ENCODE measurements at regions of chr11 and their contacts with region 1.

Region 1: DNA sequence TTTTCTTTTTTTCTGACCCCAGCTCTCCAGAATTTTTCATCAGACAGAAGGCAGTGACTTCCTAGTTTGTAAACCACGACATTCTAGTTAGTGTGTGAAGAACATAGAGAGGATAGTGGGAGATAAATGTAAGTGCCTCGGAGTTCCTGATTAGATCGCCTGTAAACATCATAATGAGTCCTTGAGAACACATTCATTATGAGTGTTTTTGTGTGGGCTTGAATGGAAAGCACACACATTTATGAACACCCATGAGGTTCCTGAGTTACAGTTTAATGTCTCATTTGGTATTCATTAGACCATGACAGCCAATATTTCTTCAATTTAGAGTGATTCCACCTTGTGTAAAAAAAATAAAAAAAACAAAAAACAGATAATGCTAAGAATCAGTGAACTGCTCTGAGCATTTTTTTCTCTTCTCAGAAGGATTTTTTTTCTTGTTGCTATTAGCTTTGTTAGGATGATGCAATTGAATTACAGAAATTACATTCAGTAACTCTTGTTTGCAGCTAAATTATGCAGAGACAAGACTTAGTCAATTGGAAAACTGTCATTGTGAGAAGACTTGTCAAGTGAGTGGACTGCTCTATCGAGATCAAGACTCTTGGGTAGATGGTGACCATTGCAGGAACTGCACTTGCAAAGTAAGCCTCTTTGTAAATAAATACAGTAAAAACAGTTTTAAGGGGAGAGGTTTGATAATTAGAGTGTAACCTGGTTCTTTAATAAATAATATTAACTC is 257.6 kb downstream of the NELL1 start:
- DNase-seq: no peak
- H3K4me3 ChIP-seq: no peak overlapping the region
- CTCF ChIP-seq: no peak
- POLR2A ChIP-seq: no peak

Region 2: DNA sequence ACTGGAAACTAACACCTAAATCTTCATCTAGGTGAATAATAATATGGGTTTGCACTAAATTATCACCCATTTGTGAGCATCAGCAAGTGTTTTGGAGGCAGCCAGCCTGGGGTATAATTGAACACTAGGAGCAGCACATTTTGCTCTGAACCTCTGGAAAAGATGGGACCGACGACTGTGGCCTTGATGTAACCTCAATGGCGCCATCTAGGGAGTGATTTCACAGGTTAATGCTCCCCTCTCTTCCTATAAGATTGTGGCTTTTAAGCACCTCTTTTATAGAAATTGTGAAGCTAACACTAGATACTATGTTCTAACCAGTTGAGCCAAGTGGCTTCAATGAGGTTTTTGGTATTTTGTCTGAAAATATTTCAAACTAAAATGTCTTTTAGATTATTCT is 53.9 kb before region 1 on chr11:
- intact Hi-C with region 1: loop called (anchors 5 kb)
- DNase-seq: no peak
- H3K4me3 ChIP-seq: no peak overlapping the region
- CTCF ChIP-seq: no peak
- POLR2A ChIP-seq: no peak

Region 3: DNA sequence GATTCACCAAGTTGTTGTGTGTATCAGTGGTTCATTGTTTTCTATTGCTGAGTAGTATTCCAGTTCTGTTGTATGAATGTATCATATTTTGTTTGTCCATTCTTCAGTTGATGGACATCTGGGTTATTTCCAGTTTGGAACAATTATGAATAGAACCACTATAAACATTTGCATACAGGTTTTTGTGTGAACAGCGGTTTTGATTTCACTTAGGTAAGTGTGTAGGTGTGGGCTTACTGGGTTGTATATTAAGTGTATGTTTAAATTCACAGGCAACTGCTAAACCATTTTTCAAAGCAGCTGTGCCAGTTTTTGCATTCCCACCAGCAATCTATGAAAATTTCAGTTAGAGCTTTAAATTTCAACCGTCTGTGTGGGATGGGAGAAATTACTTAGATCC is 39.8 kb before region 1 on chr11:
- intact Hi-C with region 1: no loop called
- DNase-seq: no peak
- H3K4me3 ChIP-seq: no peak overlapping the region
- CTCF ChIP-seq: no peak
- POLR2A ChIP-seq: no peak

Measured in lower leg skin (tissue), 4 donors.